ENCODE measurements at regions of chr17 and their contacts with region 1.

Region 1: GRCh38 chr17:68179926-68180285 is 67.9 kb upstream of the AMZ2 start:
- DNase-seq: no peak
- H3K4me3 Mint-ChIP-seq: no peak overlapping the region
- H3K27ac Mint-ChIP-seq: no peak overlapping the region
- H3K4me1 Mint-ChIP-seq: peaks cover 51% of the 10 kb centered on the region
- H3K27me3 Mint-ChIP-seq: no peaks in the 10 kb centered on the region

Region 2: DNA sequence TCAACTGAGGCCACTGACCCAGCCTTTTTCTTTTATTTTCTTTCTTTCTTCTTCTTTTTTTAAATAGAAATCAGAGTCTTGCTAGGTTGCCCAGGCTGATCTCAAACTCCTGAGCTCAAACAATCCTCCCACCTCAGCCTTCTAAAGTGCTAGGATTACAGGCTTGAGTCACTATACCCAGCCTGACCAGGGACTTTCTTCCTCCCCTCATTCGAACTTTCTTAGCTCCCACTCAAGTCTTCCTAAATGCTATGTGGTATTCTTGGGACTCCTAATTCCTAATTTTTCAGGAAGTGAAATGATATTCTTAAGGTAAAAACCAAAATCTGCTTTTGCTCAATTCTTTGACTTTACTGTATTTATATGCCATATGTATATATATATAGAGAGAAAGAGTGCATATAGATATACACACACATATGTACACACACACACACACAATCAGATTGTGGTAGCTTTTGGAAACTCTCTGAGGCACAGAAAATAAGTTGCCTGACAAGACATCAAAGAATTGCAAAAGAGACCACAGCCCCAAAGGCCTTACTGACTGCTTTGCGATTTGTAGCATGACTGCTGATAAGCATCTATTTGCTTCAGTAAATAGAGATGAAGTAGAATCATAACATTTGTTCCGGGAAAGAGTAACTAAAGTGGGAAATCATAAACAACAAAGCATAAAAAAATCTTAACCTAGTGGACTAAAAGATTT is 58.4 kb after region 1 on chr17:
- intact Hi-C with region 1: loop called (anchors 2 kb)
- DNase-seq: no peak
- H3K4me3 Mint-ChIP-seq: peak overlapping the region; percentile 75
- H3K27ac Mint-ChIP-seq: peak overlapping the region; percentile 95
- H3K4me1 Mint-ChIP-seq: peaks cover 63% of the 10 kb centered on the region
- H3K27me3 Mint-ChIP-seq: no peaks in the 10 kb centered on the region

Region 3: GRCh38 chr17:68247445-68248198 is 67.7 kb after region 1 on chr17 and contains the start of gene AMZ2:
- intact Hi-C with region 1: loop called (anchors 2 kb)
- DNase-seq: peak; percentile 97
- H3K4me3 Mint-ChIP-seq: peak within 1 kb of the TSS; percentile 91
- H3K27ac Mint-ChIP-seq: peak within 1 kb of the TSS; percentile 94
- H3K4me1 Mint-ChIP-seq: peaks cover 39% of the 10 kb centered on the region
- H3K27me3 Mint-ChIP-seq: no peaks in the 10 kb centered on the region
- total RNA-seq, gene AMZ2: 85.9 and 111 TPM in 2 replicates

Measured in activated T-helper 2 cell treated with anti-CD3 and anti-CD28 coated beads, Interferon-gamma antibody, Interleukin-2, Interleukin-4, amounts not matched to agents 10 μg/mL and 5 μg/mL and 100 μg/mL, durations not matched to agents 14 hours and 24 hours and 36 hours (primary cell).